ENCODE measurements at regions of chr3 and their contacts with region 1.

Region 1: DNA sequence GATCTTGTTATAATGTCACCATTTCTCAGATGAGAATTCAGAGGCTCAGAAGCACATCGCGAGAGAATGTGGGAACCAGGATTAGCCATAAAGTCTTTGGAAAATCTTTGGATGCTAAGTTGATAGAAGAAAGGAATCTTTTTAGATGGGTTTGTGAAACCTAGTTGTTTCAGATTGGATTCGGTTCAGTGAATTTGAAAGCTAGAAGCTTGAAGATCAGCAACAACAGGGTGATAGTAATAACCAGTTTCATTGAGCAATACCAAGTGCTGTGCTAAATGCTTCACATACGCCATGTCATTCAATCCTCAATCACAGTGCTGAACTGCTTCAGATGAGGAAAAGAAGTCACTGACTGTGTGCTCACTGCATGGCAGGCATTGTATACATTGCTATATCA is 47.4 kb upstream of the MITF start:
- DNase-seq: no peak
- H3K4me3 ChIP-seq: no peak overlapping the region
- H3K27ac ChIP-seq: no peak overlapping the region
- H3K4me1 ChIP-seq: peaks cover 0 to 6% of the 10 kb centered on the region in 2 experiments; a peak in 1 of 4 replicates
- H3K27me3 ChIP-seq: no peaks in the 10 kb centered on the region
- CTCF ChIP-seq: no peak
- EP300 ChIP-seq: no peak
- RAD21 ChIP-seq: no peak

Region 2: DNA sequence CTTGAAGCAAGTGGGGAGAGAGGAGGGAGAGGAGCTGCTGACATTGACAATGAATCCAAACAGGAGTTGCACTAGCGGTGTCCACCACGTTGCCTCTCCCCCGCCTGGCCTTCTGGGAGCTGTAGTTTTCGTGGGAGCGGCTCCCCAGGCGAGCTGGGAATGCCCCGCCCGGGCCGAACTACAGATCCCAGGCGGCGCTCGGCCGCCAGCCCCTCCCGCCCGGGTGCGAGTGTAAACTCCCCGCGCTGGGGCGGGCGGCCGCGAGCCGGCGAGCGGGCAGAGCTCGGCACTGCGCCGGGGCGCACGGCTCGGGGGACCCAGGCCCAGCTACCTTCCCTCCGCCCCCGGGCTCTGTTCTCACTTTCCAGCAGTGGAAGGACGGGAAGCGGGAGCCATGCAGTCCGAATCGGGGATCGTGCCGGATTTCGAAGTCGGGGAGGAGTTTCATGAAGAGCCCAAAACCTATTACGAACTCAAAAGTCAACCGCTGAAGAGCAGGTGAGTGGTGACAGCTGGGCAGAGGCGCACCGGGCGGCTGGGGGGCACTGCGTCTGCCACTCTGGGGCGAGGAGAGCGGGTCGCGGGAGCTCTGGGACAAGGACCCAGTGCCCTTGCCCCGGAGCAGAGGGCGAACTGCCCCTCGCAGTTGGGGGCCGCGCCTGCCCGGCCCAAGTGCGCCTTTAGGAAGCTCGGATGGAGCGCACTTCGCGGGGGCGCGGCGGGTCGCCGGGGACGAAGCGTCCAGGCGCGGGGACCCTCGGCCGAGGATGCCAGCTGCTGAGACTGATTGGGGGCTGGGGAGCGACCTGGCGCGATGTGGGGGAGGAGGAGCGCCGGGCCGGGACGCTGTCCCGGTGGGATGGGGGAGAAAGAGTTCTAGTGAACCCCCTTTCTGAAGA is 47.6 kb after region 1 on chr3 and contains the start of gene MITF:
- CTCF ChIA-PET with region 1: interaction called, 10 read pairs
- POLR2A ChIA-PET with region 1: no interaction called
- DNase-seq: peak; percentile 95
- H3K4me3 ChIP-seq: peak within 1 kb of the TSS; percentile 86 to 95
- H3K27ac ChIP-seq: peak within 1 kb of the TSS; percentile 5 to 50; a peak in 3 of 4 replicates
- H3K4me1 ChIP-seq: peaks cover 0 to 8% of the 10 kb centered on the region in 2 experiments; a peak in 1 of 4 replicates
- H3K27me3 ChIP-seq: no peaks in the 10 kb centered on the region
- CTCF ChIP-seq: no peak
- EP300 ChIP-seq: no peak
- RAD21 ChIP-seq: no peak
- polyA plus RNA-seq, gene MITF: 1.7 and 2.5 TPM in 2 replicates

Region 3: GRCh38 chr3:69791919-69792399 is 100.1 kb after region 1 on chr3:
- CTCF ChIA-PET with region 1: interaction called, 76 read pairs
- POLR2A ChIA-PET with region 1: no interaction called
- DNase-seq: peak; percentile 28
- H3K4me3 ChIP-seq: no peak overlapping the region
- H3K27ac ChIP-seq: peak overlapping the region in 1 of 2 experiments; percentile 14; a peak in 1 of 4 replicates
- H3K4me1 ChIP-seq: peaks cover 3 to 6% of the 10 kb centered on the region in 2 experiments; a peak in 1 of 4 replicates
- H3K27me3 ChIP-seq: no peaks in the 10 kb centered on the region
- CTCF ChIP-seq: peak; percentile 71
- EP300 ChIP-seq: no peak
- RAD21 ChIP-seq: peak; percentile 83

Region 4: DNA sequence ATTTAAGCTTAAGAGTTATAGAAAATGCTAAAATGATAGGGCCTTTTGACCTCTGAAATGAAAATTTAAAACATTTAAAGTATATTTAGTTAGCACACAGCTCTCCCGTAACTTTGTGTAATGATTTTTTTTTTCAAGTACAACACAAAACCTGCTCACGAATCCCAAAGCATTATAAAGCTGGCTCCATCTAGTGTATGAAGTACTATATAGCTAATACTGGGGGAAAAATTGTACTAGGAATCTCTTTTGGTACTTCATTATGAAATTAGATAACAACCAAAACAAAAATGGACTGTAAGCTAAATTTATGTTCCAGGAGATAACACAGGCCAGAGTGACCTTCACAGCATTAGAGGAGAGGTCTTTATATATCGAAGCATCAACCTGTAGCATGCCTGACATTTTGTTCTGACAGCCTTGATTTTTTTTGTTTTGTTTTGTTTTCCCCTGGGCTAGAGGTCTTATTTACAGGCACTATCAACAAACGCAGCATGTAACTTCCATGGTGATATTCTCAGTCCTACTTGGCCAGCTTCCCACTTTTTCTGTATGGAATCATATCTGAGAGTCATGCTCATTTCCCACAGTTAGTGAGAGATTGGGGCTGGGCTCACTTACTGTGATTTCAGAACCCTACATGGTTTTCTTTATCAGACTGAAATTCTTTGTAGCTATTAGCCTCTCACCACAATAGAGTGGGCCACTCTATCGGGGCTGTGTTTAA is 163.7 kb after region 1 on chr3:
- CTCF ChIA-PET with region 1: interaction called, 20 read pairs
- POLR2A ChIA-PET with region 1: no interaction called
- DNase-seq: peak; percentile 41
- H3K4me3 ChIP-seq: no peak overlapping the region
- H3K27ac ChIP-seq: peak overlapping the region; percentile 6 to 25; a peak in 1 of 4 replicates
- H3K4me1 ChIP-seq: peaks cover 0 to 6% of the 10 kb centered on the region in 2 experiments; a peak in 1 of 4 replicates
- H3K27me3 ChIP-seq: no peaks in the 10 kb centered on the region
- CTCF ChIP-seq: peak; percentile 72
- EP300 ChIP-seq: no peak
- RAD21 ChIP-seq: peak; percentile 76

Region 5: DNA sequence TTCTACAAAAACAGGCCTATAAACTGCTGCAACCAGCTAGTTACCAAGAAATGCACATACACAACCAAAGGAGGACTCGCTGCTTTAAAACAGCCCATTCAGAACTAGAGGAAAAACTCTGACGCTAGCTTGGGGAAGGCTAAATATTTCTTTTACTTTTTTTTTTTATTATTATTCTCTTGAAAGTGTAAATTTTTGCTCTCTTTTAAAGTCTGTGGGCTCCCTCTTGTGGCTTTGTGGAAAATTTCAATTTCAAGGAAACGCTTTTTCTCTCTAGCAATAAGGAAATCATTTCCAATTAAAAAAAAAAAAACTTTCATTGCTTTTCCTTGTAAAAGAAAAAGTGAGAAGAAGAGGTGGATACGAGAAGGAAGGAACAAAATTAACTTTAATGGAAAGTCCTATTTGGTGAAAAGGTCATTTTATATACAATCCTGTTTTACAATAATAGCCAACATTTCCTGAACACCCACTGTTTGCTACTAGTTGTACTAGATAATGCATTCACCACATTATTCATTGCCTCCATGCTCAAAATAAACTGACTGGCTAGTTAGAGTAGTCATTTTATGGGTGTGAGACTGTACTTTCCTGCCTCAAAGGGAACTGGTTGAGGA is 256.5 kb after region 1 on chr3:
- CTCF ChIA-PET with region 1: interaction called, 19 read pairs
- POLR2A ChIA-PET with region 1: no interaction called
- DNase-seq: peak; percentile 12
- H3K4me3 ChIP-seq: no peak overlapping the region
- H3K27ac ChIP-seq: no peak overlapping the region
- H3K4me1 ChIP-seq: no peaks in the 10 kb centered on the region
- H3K27me3 ChIP-seq: no peaks in the 10 kb centered on the region
- CTCF ChIP-seq: peak; percentile 79
- EP300 ChIP-seq: no peak
- RAD21 ChIP-seq: peak; percentile 78